ENCODE measurements at regions of chr11 and their contacts with region 1.

Region 1: DNA sequence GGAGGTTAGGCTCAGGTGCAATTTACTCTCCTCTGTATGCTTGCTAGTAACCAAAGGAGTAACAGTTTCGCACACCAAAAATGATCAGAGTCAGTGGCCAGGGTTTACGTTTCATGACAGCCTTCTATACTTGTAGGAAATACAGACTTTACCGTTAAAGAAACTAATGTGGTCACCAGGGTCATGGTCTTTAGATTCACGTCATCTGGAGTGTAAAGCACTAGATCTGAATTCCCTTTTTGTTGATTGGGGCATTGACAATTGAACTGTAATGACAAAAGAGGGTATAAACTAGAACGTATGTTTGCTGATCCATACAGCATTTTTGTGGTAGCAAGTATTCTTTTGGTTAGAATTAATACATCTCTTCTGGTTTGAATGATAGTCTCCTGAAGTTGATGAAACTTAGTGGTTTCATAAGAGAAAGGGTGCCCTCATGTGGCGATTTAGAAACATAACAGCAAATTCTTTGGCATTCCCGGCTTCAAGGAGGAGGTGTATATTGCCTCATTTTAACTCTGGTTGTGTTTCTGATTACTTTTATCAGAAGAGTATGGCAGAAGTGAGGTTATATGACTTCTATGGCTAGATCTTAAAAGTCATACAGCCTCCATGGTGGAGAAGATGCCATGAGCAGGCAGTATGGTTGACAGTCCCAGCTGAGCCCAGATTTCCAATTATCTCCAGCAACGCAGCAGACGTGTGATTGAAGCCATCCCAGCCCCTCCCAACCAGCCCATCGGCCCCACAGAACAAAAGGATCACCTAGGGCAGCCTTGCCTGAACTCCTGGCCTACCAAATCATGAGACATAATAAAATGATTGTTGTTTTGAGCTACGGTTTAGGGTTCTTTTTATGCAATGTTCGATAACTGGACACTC is 35.1 kb downstream of the MMP7 start:
- DNase-seq: peak in 10 of 14 experiments; percentile 6 to 90 (median 28)
- ATAC-seq: peak; percentile 89
- H3K4me3 ChIP-seq: no peak overlapping the region
- H3K4me3 Mint-ChIP-seq: no peak overlapping the region
- H3K27ac ChIP-seq: no peak overlapping the region
- H3K27ac Mint-ChIP-seq: no peak overlapping the region
- H3K4me1 ChIP-seq: peaks cover 3% of the 10 kb centered on the region
- H3K4me1 Mint-ChIP-seq: peaks cover 7% of the 10 kb centered on the region
- H3K27me3 ChIP-seq: no peaks in the 10 kb centered on the region
- H3K27me3 Mint-ChIP-seq: peaks cover 6% of the 10 kb centered on the region
- CTCF ChIP-seq: peak; percentile 77

Region 2: DNA sequence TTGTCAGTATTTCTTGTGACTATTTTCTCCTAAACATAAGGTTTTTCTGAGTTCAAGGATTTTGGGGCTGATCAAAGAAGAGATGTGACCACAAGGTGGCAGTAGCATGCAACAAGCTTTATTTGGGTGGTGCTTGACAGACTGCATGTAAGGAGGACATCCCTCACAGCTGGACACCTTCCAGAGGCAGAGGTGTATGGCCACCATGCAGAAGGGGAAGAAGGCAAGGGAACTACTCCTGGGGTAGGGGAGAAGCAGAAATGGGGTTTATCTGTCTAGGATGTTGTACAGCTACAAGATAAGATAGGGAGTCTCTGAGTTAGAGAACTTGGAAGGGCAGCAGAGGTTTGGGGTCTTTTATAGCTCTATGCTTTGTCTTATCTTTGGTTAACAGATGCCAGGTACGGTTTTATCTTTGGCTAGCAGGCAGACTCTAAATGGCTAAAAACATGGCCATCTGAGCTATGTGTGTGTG is 153.5 kb before region 1 on chr11:
- CTCF ChIA-PET with region 1: interaction called, 12 read pairs
- POLR2A ChIA-PET with region 1: interaction called, 5 read pairs
- intact Hi-C with region 1: loop called (anchors 1 kb)
- DNase-seq: peak; percentile 45 to 89 (median 66)
- ATAC-seq: peak; percentile 24
- H3K4me3 ChIP-seq: no peak overlapping the region
- H3K4me3 Mint-ChIP-seq: peak overlapping the region; percentile 28
- H3K27ac ChIP-seq: no peak overlapping the region
- H3K27ac Mint-ChIP-seq: peak overlapping the region; percentile 14
- H3K4me1 ChIP-seq: peaks cover 9% of the 10 kb centered on the region
- H3K4me1 Mint-ChIP-seq: peaks cover 18% of the 10 kb centered on the region
- H3K27me3 ChIP-seq: no peaks in the 10 kb centered on the region
- H3K27me3 Mint-ChIP-seq: no peaks in the 10 kb centered on the region
- CTCF ChIP-seq: peak; percentile 75

Region 3: GRCh38 chr11:102390667-102391465 is 104.5 kb before region 1 on chr11:
- CTCF ChIA-PET with region 1: interaction called, 13 read pairs
- POLR2A ChIA-PET with region 1: interaction called, 3 read pairs
- intact Hi-C with region 1: loop called (anchors 1 kb)
- DNase-seq: peak in 13 of 14 experiments; percentile 32 to 79 (median 45)
- ATAC-seq: peak; percentile 76
- H3K4me3 ChIP-seq: no peak overlapping the region
- H3K4me3 Mint-ChIP-seq: no peak overlapping the region
- H3K27ac ChIP-seq: peak overlapping the region in 1 of 2 donors; percentile 7
- H3K27ac Mint-ChIP-seq: peak overlapping the region; percentile 37
- H3K4me1 ChIP-seq: peaks cover 23% of the 10 kb centered on the region
- H3K4me1 Mint-ChIP-seq: peaks cover 52% of the 10 kb centered on the region
- H3K27me3 ChIP-seq: no peaks in the 10 kb centered on the region
- H3K27me3 Mint-ChIP-seq: no peaks in the 10 kb centered on the region
- CTCF ChIP-seq: peak; percentile 90

Region 4: DNA sequence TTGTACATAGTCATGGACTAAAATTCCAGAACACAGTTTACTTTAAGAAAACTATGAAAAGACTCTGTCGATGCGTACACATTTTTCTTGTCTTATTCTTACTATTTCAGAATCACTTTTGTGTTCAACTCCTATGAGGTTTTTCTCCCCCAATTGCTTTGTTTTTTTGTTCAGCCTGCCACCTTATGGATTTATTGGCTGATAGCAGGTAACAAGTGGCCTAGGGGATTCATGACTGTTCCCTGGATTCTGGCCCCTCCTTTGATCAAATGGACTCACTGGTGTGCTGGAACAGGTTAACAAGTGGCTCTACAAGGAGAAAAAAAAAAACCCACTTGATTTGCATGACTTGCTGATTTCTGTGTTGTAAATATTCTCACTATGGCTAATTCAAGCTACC is 119.1 kb after region 1 on chr11:
- CTCF ChIA-PET with region 1: no interaction called
- POLR2A ChIA-PET with region 1: no interaction called
- intact Hi-C with region 1: loop called in 1 of 2 experiments (anchors 5 kb)
- DNase-seq: no peak
- ATAC-seq: no peak
- H3K4me3 ChIP-seq: no peak overlapping the region
- H3K4me3 Mint-ChIP-seq: no peak overlapping the region
- H3K27ac ChIP-seq: no peak overlapping the region
- H3K27ac Mint-ChIP-seq: no peak overlapping the region
- H3K4me1 ChIP-seq: peaks cover 3% of the 10 kb centered on the region
- H3K4me1 Mint-ChIP-seq: no peaks in the 10 kb centered on the region
- H3K27me3 ChIP-seq: no peaks in the 10 kb centered on the region
- H3K27me3 Mint-ChIP-seq: peaks cover 4% of the 10 kb centered on the region
- CTCF ChIP-seq: no peak

Measured in CD4-positive, alpha-beta T cell (primary cell).